ENCODE measurements at regions of chr18 and their contacts with region 1.

Region 1: DNA sequence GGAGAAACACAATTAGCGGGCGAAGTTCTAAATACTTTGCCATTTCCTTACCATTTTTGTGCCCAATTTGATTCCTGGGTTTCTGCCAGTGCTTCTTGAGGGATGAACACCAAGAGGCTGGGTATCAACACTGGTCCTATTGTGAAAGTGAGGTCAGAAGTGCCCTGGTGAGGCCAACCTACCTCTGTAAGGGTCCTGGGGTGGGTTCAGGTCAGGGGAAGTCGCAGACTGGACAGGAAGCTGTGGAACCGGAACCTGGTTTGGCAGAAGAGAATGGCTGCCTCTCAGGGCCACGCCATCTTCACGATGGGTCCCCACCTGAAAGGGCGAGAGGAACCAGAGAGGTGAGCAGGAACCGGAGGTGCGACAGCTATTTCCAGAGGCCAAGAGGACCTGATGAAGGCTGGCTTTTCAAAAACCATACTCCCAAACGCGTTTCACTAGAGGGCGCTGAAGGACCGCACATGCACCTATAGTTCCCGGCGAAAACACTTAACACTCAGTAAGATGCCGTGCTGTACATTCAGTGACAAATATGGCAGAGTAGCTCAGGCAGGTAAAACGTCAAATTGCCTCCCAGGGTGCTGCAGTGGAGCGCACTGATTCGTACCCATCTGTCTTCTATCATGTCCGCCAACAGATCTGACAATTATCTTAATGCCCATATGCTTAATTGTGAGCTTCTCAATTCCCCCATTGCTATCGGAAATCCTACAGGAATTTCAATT is 275.3 kb upstream of the CCDC68 start:
- DNase-seq: peak; percentile 76 to 89
- ATAC-seq: peak; percentile 89
- H3K4me3 ChIP-seq: no peak overlapping the region
- H3K27ac ChIP-seq: peak overlapping the region in 1 of 2 donors; percentile 28
- H3K4me1 ChIP-seq: peaks cover 3% of the 10 kb centered on the region in 2 donors
- H3K27me3 ChIP-seq: no peaks in the 10 kb centered on the region

Region 2: DNA sequence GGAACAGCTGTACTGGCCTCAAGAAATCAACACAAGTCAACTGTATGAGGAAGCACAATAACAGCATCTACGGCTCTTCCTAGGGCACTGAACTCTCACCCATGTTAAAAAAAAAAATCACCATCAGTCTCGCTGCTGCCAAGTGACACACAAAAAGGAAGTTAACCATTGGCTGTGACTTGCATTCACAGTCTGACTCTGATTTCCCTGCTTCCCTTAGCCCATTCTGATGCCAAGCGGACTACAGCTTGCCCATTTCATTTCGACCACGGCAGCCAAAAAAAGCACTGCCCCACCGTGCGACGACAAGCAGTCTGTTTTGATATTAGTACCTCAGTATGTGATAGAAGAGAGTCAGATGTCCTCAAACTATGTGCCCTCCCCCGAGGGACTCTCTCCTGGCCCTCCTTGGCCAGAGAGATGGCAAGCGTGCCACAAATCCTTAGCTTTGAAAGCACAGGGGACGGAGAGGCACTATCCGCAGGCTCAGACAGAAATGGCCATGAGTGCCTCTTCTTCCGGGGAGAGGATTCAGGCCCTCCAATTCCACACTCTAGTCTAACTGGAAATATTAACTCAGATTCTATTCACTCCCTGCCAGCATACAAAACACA is 103.5 kb after region 1 on chr18:
- intact Hi-C with region 1: loop called in 1 of 2 experiments (anchors 5 kb)
- DNase-seq: peak in 1 of 2 donors; percentile 76
- ATAC-seq: peak; percentile 78
- H3K4me3 ChIP-seq: peak overlapping the region; percentile 2 to 47
- H3K27ac ChIP-seq: peak overlapping the region; percentile 84
- H3K4me1 ChIP-seq: peaks cover 0 to 4% of the 10 kb centered on the region in 2 donors
- H3K27me3 ChIP-seq: no peaks in the 10 kb centered on the region

Region 3: DNA sequence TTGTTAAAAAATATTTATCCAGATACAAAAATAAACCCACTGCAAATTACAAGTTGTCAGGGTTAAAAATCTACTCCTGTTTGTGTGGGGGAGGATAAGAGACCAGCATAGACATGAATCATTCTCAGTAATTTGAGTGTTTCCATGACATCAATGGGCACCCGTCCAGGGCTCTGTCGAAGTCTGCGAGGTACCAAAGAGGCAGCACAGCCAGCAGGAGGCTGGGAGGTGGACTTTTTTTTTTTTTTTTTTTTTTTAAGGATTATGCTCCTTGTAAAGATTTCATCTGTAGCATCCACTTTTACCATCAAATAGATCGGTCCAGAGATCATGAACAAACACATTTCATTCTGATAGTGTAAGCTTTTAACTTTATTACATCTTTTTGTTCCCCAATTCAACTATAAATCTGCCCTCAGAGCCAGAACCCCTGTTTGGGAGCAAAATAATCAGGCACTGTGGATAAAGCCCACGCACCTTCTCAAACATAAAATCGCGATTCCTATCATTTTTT is 171.4 kb after region 1 on chr18:
- intact Hi-C with region 1: loop called in 1 of 2 experiments (anchors 5 kb)
- DNase-seq: peak; percentile 91
- ATAC-seq: peak; percentile 68
- H3K4me3 ChIP-seq: no peak overlapping the region
- H3K27ac ChIP-seq: peak overlapping the region in 1 of 2 donors; percentile 48
- H3K4me1 ChIP-seq: no peaks in the 10 kb centered on the region
- H3K27me3 ChIP-seq: no peaks in the 10 kb centered on the region

Region 4: DNA sequence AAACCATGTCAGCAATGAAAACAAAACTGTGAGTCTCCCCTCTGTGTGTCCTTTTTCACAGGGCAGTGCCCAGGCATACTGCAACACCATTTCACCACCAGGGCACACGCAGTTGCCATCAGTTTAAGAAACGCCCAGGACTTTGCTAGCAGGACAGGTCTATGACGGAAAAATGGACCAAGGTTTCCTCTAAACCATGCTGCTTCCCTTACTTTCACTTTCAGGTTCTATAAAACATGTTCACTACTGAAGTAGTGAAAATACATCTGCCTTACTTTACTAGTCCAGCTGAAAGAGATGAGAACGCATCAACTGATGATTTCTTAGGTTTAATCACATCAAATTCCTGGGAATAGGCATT is 242.9 kb after region 1 on chr18:
- intact Hi-C with region 1: loop called in 1 of 2 experiments (anchors 10 kb)
- DNase-seq: peak in 1 of 2 donors; percentile 53
- ATAC-seq: peak; percentile 80
- H3K4me3 ChIP-seq: peak overlapping the region; percentile 91 to 100
- H3K27ac ChIP-seq: peak overlapping the region; percentile 86 to 87
- H3K4me1 ChIP-seq: peaks cover 0 to 3% of the 10 kb centered on the region in 2 donors
- H3K27me3 ChIP-seq: no peaks in the 10 kb centered on the region

Region 5: GRCh38 chr18:55781481-55781957 is 547.0 kb after region 1 on chr18:
- intact Hi-C with region 1: loop called (anchors 5 to 10 kb)
- DNase-seq: peak in 1 of 2 donors; percentile 54
- ATAC-seq: peak; percentile 60
- H3K4me3 ChIP-seq: no peak overlapping the region
- H3K27ac ChIP-seq: no peak overlapping the region
- H3K4me1 ChIP-seq: peaks cover 0 to 2% of the 10 kb centered on the region in 2 donors
- H3K27me3 ChIP-seq: no peaks in the 10 kb centered on the region

Region 6: DNA sequence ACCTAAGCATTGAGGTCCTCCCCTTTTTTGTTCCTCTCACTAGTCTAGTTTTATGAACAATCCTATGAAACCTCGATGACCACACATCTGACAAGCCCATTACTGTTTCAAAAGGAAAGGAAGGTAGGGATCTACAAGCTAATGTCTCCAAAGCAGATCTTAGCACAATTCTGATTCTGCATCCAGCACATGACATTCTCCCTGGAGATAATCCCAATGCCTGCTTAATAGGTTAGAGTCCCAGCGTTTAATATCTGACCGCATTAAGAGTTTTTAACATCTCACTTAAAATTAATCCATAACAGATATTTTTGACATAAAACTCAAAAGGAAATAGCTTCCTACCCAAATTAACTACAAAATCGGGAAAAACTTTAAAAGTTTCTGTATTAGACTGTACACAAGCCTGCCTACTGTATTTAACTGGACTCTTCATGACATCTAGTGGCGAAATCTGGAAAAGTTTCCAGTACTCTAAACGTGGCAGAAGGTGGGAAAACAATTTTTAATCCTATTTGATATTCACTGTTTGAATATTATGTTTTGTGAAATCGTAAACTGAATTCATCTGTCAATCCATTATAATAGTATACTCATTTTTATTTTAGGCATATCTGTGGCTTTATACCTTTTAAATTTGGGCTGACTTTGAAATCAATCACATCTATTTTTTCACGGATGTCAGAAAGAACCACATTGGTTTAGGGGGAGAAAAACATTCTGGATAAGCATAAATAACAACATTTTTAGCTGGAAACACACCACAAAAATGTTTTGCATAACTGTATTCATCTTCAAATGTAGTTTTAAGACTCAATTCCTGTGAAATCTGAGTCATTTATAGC is 1341.5 kb after region 1 on chr18:
- intact Hi-C with region 1: loop called in 1 of 2 experiments (anchors 10 kb)
- DNase-seq: no peak
- ATAC-seq: peak; percentile 89
- H3K4me3 ChIP-seq: peak overlapping the region in 1 of 2 donors; percentile 18
- H3K27ac ChIP-seq: no peak overlapping the region
- H3K4me1 ChIP-seq: peaks cover 2 to 4% of the 10 kb centered on the region in 2 donors
- H3K27me3 ChIP-seq: no peaks in the 10 kb centered on the region

Measured in aorta (tissue), 5 donors.